Endothelial cell of umbilical vein (primary cell): ENCODE measurements at regions of chrX and their contacts with region 1.

Region 1: DNA sequence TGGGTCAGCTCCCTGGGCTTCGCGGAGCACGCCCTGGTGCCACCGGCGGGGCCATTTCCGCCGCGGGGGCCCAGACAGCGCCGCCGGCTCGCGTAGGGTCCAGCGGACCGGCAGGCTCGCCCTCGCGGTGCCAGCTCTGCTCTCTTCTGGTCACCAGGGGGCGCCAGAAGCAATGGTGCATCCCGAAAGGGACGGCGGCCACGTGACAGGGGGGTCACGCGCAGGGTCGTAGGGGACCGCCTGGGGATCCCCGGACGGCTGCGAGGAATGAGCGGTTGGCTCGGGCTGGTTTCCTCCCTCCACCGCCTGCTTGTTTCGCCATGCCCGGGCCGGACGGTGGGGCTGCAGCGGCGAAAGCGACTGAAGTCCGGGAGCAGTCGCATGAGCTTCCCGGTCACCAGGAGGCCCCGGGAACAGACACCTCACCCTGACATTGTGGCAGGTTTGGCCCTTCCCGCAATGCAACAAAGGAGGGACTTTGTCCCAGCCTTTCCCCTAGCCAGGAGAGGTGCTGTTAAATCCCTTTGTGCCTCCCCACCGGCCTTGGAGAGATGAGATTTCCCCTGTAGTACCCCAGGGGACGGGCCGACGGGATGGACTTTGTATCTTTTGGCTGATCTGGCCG is 15.8 kb downstream of the ZCCHC12 start:
- DNase-seq: peak; percentile 55
- H3K4me3 ChIP-seq: peak overlapping the region in 2 of 3 experiments; percentile 31 to 43
- H3K27ac ChIP-seq: no peak overlapping the region
- H3K4me1 ChIP-seq: peaks cover 5% of the 10 kb centered on the region
- H3K27me3 ChIP-seq: no peaks in the 10 kb centered on the region
- CTCF ChIP-seq: peak; percentile 60 to 78
- POLR2A ChIP-seq: no peak

Region 2: DNA sequence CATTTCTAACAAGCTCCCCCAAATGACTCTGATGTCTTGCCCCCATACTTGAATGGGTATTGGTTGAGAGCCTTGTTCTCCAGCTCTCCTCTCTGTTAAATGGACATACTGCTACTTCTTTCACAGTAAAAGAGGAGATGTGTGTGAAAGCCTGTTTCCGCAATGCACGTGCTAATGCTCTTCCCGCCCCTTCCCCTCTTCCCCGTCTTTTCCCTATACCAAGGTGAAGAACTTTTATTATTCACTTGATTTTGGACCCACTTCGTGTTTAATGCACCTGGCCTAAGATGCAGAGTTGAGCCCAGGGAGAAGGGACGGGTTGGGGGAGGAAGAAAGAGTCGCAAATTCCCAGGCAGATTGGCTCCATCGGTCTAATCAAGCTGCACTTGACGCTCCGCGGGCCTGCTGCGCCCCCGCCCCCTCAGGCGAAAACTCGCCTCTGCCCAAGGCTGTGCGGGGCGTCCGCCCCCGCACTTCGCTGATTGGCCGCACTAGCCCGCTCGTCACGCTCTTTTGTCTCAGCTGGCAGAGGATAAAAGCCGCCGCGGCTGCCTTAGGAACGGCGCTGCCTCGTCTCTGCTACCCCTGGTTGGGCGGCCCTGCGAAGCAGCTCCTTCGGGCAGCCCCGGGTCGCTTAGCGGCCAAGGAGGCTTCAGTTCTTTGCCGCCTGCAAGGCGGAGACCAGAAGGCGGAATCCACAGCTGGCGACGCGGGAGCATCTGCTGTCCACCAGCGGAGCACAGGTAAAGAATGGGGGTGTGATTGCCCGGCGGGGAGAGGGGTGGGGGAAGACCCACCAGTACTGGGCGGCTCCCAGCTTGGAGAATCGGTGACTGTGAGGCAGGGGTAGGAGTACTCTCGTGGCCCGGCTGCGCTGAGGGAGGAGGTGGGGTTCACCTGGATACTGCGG is 15.9 kb before region 1 on chrX and contains the start of gene ZCCHC12:
- CTCF ChIA-PET with region 1: interaction called, 13 read pairs
- POLR2A ChIA-PET with region 1: no interaction called
- dilution Hi-C with region 1: no loop called
- intact Hi-C with region 1: no loop called
- DNase-seq: peak; percentile 54
- H3K4me3 ChIP-seq: peak within 1 kb of the TSS in 2 of 3 experiments; percentile 5 to 32
- H3K27ac ChIP-seq: no peak within 1 kb of the TSS
- H3K4me1 ChIP-seq: no peaks in the 10 kb centered on the region
- H3K27me3 ChIP-seq: peaks cover 13 to 19% of the 10 kb centered on the region in 2 experiments
- CTCF ChIP-seq: no peak
- POLR2A ChIP-seq: no peak
- total RNA-seq, gene ZCCHC12: 0.18 and 0.29 TPM in 2 replicates

Region 3: DNA sequence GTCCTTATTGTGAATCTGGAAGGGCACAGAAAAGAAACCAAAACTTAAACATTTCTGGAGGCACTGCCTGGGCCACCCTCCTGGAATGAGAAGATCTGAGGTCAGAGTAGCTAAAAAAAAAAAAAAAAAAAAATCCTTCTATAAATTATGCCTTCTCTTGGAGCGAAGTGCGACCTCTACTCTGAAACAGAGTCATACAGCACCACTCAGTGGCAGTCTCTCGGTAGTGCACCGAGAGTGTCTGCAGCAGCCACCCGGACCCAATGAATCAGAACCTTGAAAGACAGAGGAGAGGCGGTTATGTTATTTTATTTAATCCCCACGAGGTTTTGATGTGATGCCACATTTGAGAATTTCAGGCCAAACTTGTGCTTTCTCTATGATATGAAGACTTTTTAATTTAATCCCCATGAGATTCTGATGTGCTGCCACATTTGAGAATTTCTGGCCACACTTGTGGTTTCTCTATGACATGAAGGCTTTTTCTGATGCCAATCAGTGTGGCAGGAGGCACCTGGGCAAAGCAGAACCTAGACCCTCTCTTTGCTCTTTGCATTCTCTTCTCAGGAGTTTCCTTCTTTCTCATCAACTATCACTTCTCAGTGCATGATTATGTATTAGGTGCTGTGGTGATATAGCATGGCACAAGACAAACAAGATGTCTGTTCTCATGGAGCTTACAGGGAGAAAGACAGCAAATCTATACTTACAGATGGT is 227.7 kb after region 1 on chrX:
- CTCF ChIA-PET with region 1: interaction called, 34 read pairs
- POLR2A ChIA-PET with region 1: no interaction called
- dilution Hi-C with region 1: no loop called
- intact Hi-C with region 1: loop called (anchors 2 kb)
- DNase-seq: peak; percentile 64
- H3K4me3 ChIP-seq: no peak overlapping the region
- H3K27ac ChIP-seq: no peak overlapping the region
- H3K4me1 ChIP-seq: no peaks in the 10 kb centered on the region
- H3K27me3 ChIP-seq: peaks cover 0 to 2% of the 10 kb centered on the region in 2 experiments
- CTCF ChIP-seq: peak; percentile 53 to 57
- POLR2A ChIP-seq: no peak